CD8-positive, alpha-beta memory T cell (primary cell): ENCODE measurements at regions of chr2 and their contacts with region 1.

Region 1: GRCh38 chr2:10408649-10409579 is 39.2 kb downstream of the ODC1 start:
- DNase-seq: peak; percentile 73 to 87 (median 76)
- H3K4me3 ChIP-seq: peak overlapping the region; percentile 29
- H3K4me3 Mint-ChIP-seq: peak overlapping the region; percentile 57 to 92 (median 88)
- H3K27ac ChIP-seq: peak overlapping the region; percentile 52
- H3K27ac Mint-ChIP-seq: peak overlapping the region; percentile 79 to 99 (median 94)
- H3K4me1 ChIP-seq: peaks cover 34% of the 10 kb centered on the region
- H3K4me1 Mint-ChIP-seq: peaks cover 29 to 40% (median 32%) of the 10 kb centered on the region in 3 donors
- H3K27me3 ChIP-seq: no peaks in the 10 kb centered on the region
- H3K27me3 Mint-ChIP-seq: peaks cover 0 to 1% of the 10 kb centered on the region in 2 donors

Region 2: DNA sequence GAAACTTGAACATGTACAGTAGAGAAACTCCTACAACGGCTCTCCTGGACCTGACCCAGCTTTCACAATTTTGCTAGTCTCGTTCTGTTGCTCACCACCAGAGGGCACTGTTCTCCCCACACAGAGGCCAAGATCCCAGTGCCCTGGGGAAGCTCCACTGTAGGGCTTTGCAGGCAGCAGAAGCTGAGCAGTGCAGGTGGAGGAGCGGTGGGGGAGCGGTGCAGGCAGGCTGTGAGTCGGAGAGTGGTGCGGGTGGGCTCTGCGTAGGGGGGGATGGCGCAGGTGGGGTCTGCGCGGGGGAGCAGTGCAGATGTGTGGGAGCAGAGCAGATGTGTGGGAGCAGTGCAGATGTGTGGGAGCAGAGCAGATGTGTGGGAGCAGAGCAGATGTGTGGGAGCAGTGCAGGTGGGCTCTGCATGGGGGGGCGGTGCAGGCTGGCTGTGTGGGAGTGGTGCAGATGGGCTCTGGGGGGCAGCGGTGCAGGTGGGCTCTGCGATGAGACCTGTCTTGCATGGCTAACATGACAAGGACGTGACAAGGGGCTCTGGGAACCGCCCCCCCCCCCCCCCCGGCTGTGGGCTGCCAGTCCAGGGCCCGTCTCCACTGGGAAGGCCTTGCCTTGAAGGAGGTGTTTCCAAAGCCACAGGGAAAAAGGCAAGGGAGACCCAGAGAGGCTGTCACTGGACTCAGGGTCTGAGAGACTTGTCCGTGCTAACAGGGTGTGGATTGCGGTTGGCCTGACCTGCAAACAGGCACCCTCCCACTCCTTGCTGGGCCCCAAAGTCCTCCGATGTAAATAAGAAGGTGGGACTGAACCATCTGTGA is 336.0 kb before region 1 on chr2:
- CTCF ChIA-PET with region 1: interaction called, 15 read pairs
- POLR2A ChIA-PET with region 1: no interaction called
- DNase-seq: peak; percentile 62 to 83 (median 72)
- H3K4me3 ChIP-seq: no peak overlapping the region
- H3K4me3 Mint-ChIP-seq: no peak overlapping the region
- H3K27ac ChIP-seq: no peak overlapping the region
- H3K27ac Mint-ChIP-seq: no peak overlapping the region
- H3K4me1 ChIP-seq: no peaks in the 10 kb centered on the region
- H3K4me1 Mint-ChIP-seq: peaks cover 3 to 6% (median 5%) of the 10 kb centered on the region in 3 donors
- H3K27me3 ChIP-seq: peaks cover 14% of the 10 kb centered on the region
- H3K27me3 Mint-ChIP-seq: peaks cover 21 to 53% of the 10 kb centered on the region in 2 donors

Region 3: DNA sequence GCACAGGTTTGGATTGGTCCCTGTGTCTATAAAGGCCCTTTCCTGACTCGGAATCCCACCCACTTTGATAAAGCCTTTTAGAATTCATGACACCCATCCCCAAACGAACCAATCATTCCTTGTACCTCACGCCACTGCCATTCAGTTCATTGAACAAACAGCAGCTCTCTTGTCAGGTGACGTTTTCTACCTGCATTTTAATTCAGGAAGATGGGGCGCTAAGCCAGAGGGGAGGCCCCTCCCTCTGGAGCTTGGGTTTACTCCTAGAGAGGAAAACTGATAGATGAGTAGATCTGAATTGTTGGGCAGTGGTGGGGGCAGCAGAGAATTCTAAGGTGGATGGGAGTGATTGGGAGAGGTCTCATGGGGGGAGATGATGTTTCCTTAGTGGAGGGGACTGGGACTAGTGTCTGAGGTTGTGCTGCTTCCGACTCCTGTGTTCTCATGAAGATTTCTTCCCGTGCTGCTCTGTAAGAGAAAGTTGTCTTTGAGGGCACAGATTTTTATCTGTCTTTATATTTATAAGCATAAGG is 276.8 kb before region 1 on chr2:
- CTCF ChIA-PET with region 1: interaction called, 17 read pairs
- POLR2A ChIA-PET with region 1: no interaction called
- DNase-seq: no peak
- H3K4me3 ChIP-seq: no peak overlapping the region
- H3K4me3 Mint-ChIP-seq: no peak overlapping the region
- H3K27ac ChIP-seq: no peak overlapping the region
- H3K27ac Mint-ChIP-seq: no peak overlapping the region
- H3K4me1 ChIP-seq: no peaks in the 10 kb centered on the region
- H3K4me1 Mint-ChIP-seq: peaks cover 5 to 38% (median 14%) of the 10 kb centered on the region in 3 donors
- H3K27me3 ChIP-seq: no peaks in the 10 kb centered on the region
- H3K27me3 Mint-ChIP-seq: no peaks in the 10 kb centered on the region

Region 4: DNA sequence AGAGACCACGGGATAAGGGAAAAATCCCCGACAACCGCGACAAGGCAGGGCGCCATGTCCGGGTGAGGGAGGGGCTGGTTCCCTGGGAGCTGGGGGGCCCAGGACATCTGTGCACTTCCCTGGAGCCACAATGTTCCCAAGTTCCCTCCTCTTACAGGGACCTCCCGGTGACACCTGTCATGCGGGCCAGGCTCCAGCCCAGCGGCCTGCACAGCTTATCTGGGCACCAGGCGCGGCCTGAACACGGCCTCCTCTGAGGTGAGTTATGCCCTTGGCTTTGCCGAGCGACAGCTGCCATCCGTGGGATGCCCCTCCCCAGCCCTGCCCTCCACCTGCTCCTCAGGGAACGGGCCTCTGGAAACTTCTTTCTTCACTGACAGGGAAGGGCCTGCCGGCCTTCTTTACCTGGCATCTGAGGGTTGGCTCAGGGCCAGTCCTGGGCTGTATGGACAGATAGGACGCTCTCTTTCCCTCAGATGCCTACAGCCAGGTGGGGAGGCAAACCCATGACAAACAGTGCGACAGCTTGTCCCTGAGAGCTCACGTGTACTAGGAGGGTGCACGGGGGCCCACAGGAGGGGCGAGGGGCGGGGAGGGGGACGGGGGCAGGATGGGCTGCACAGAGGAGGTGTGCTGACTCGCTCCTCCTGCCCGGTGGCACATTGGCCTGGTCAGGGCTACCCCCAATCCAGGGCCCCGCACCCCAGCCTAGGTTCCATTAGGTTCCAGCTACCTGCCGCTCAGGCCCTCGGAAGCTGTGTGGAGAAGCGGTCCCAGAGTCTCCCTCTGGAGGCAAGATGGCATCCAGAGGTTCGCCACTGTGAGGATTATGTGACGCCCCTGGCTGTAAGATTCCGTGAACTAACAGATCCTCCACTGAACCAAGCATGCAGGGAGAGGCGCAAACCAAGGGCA is 141.1 kb before region 1 on chr2:
- CTCF ChIA-PET with region 1: interaction called, 70 read pairs
- POLR2A ChIA-PET with region 1: no interaction called
- DNase-seq: peak in 1 of 5 donors; percentile 33
- H3K4me3 ChIP-seq: no peak overlapping the region
- H3K4me3 Mint-ChIP-seq: no peak overlapping the region
- H3K27ac ChIP-seq: no peak overlapping the region
- H3K27ac Mint-ChIP-seq: no peak overlapping the region
- H3K4me1 ChIP-seq: no peaks in the 10 kb centered on the region
- H3K4me1 Mint-ChIP-seq: peaks cover 0 to 5% (median 5%) of the 10 kb centered on the region in 3 donors
- H3K27me3 ChIP-seq: no peaks in the 10 kb centered on the region
- H3K27me3 Mint-ChIP-seq: peaks cover 0 to 2% of the 10 kb centered on the region in 2 donors

Region 5: GRCh38 chr2:10302479-10303180 is 106.3 kb before region 1 on chr2 and contains the start of gene HPCAL1:
- CTCF ChIA-PET with region 1: interaction called, 99 read pairs
- POLR2A ChIA-PET with region 1: interaction called, 19 read pairs
- DNase-seq: peak; percentile 80 to 86 (median 83)
- H3K4me3 ChIP-seq: peak within 1 kb of the TSS; percentile 76
- H3K4me3 Mint-ChIP-seq: peak within 1 kb of the TSS; percentile 97 to 99 (median 97)
- H3K27ac ChIP-seq: peak within 1 kb of the TSS; percentile 54
- H3K27ac Mint-ChIP-seq: peak within 1 kb of the TSS; percentile 76 to 97 (median 94)
- H3K4me1 ChIP-seq: peaks cover 60% of the 10 kb centered on the region
- H3K4me1 Mint-ChIP-seq: peaks cover 63 to 78% (median 76%) of the 10 kb centered on the region in 3 donors
- H3K27me3 ChIP-seq: no peaks in the 10 kb centered on the region
- H3K27me3 Mint-ChIP-seq: peaks cover 0 to 2% of the 10 kb centered on the region in 2 donors
- total RNA-seq, gene HPCAL1: 44.1 to 47.6 TPM

Region 6: DNA sequence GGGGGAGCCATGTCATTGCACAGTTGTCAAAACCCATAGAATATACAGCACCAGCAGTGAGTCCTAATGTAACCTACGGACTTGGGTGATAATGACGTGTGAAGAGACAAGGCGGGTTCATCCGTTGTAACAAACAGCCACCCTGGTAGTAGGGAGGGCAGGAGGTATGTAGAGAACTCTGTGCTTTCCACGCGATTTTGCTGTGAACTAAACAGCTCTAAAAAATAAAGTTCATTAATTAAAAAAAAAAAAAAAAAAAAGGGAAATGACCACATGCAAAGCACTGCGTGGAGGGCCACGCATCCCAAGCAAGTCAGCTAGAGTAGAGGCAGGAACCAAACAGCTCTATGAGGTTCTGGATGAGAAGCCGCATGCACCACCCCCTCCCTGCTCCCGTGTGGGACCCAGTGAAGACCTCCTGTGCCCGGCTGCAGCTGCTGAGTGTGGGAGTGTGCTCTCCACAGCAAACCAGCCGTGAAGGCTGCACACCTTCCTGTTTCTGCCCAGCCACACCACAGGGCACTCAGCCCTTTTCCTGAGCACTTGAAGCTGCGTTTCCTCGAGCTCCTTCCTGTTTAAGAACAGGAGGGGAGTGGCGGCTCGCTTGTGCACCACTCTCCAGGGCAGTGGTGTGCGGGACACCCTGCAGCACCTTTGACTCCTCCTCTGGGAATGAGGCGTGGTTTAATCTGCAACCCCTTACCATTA is 26.4 kb before region 1 on chr2:
- CTCF ChIA-PET with region 1: interaction called, 17 read pairs
- POLR2A ChIA-PET with region 1: interaction called, 3 read pairs
- DNase-seq: peak; percentile 22 to 73 (median 72)
- H3K4me3 ChIP-seq: peak overlapping the region; percentile 75
- H3K4me3 Mint-ChIP-seq: peak overlapping the region; percentile 65 to 88 (median 73)
- H3K27ac ChIP-seq: peak overlapping the region; percentile 0
- H3K27ac Mint-ChIP-seq: peak overlapping the region; percentile 79 to 97 (median 85)
- H3K4me1 ChIP-seq: peaks cover 90% of the 10 kb centered on the region
- H3K4me1 Mint-ChIP-seq: peaks cover 81 to 99% (median 81%) of the 10 kb centered on the region in 3 donors
- H3K27me3 ChIP-seq: no peaks in the 10 kb centered on the region
- H3K27me3 Mint-ChIP-seq: no peaks in the 10 kb centered on the region

Region 7: GRCh38 chr2:10434886-10435819 is 26.2 kb after region 1 on chr2:
- CTCF ChIA-PET with region 1: interaction called, 59 read pairs
- POLR2A ChIA-PET with region 1: no interaction called
- DNase-seq: peak; percentile 54 to 76 (median 67)
- H3K4me3 ChIP-seq: no peak overlapping the region
- H3K4me3 Mint-ChIP-seq: peak overlapping the region in 4 of 7 donors; percentile 20 to 55 (median 44)
- H3K27ac ChIP-seq: no peak overlapping the region
- H3K27ac Mint-ChIP-seq: peak overlapping the region in 2 of 8 donors; percentile 61 to 70
- H3K4me1 ChIP-seq: peaks cover 7% of the 10 kb centered on the region
- H3K4me1 Mint-ChIP-seq: peaks cover 10 to 22% (median 11%) of the 10 kb centered on the region in 3 donors
- H3K27me3 ChIP-seq: no peaks in the 10 kb centered on the region
- H3K27me3 Mint-ChIP-seq: peaks cover 0 to 15% of the 10 kb centered on the region in 2 donors

Region 8: GRCh38 chr2:10514743-10515142 is 105.8 kb after region 1 on chr2:
- CTCF ChIA-PET with region 1: no interaction called
- POLR2A ChIA-PET with region 1: no interaction called
- DNase-seq: no peak
- H3K4me3 ChIP-seq: no peak overlapping the region
- H3K4me3 Mint-ChIP-seq: no peak overlapping the region
- H3K27ac ChIP-seq: no peak overlapping the region
- H3K27ac Mint-ChIP-seq: no peak overlapping the region
- H3K4me1 ChIP-seq: no peaks in the 10 kb centered on the region
- H3K4me1 Mint-ChIP-seq: peaks cover 0 to 4% (median 0%) of the 10 kb centered on the region in 3 donors
- H3K27me3 ChIP-seq: no peaks in the 10 kb centered on the region
- H3K27me3 Mint-ChIP-seq: no peaks in the 10 kb centered on the region